ENCODE measurements at regions of chr12 and their contacts with region 1.

Region 1: DNA sequence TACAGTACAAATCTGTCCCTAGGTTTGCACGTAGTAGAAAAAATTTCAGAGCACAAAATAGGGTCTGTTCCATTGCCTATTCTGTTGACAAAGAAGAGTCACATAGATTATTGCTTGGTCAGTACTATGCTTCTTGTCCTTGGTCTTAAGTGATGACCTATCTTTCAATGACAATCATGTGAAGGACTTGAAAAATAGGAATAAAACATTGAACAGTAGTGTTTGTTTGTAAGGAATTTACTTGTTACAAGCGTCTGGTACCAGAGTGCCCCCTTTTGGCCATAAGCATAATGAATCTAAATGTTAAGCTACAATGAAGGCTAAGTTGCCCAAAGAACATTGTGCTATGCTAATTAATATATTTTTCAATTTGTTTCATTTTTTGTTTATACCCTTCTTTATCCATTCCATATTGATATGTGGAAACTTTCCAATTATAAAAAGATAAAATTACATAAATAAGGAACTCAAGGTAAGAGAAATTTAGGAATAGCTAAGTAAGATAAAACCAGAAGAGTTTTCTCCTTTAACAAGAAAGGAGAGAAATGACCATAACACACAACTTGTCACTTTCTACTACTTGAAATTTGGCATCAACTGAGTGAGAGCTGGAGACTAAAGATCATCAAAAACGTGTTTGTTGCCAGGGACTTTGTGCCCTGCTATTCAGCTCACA is 204.7 kb downstream of the EPS8 start:
- DNase-seq: no peak
- ATAC-seq: no peak
- H3K4me3 ChIP-seq: no peak overlapping the region
- H3K27ac ChIP-seq: no peak overlapping the region
- H3K4me1 ChIP-seq: no peaks in the 10 kb centered on the region
- H3K27me3 ChIP-seq: no peaks in the 10 kb centered on the region
- CTCF ChIP-seq: peak; percentile 63

Region 2: GRCh38 chr12:15404485-15404884 is 180.0 kb before region 1 on chr12:
- intact Hi-C with region 1: no loop called
- DNase-seq: no peak
- ATAC-seq: no peak
- H3K4me3 ChIP-seq: no peak overlapping the region
- H3K27ac ChIP-seq: no peak overlapping the region
- H3K4me1 ChIP-seq: no peaks in the 10 kb centered on the region
- H3K27me3 ChIP-seq: no peaks in the 10 kb centered on the region
- CTCF ChIP-seq: no peak

Region 3: DNA sequence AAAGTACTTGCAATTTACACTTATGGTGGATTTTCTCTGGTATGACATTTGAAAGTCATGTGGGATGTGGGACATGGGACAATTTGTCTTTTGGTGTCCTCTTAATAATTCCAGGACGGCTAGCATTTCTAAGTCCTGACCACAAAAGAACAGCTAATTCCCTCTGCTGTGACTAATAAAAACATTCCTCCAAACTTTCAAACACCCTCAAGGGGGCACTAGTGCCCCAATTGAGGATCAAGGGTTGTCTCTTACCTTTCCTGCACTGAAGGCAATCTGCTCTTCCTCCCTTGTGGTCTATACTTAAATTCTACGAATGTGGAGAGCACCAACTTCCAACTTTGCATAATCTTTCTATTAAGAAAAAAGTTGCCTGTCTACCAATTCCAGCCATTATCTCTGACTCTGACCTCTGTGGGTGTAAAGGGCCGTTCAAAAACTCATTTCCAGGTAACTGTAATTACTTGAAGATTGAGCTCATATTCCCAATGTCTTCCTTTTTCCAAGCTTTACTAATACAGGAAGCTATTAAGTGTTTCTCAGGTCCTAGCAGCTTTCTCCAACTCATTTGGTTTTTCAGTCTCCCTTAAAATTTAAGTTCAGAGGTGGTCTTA is 52.0 kb before region 1 on chr12:
- intact Hi-C with region 1: loop called in 1 of 2 experiments (anchors 5 kb)
- DNase-seq: no peak
- ATAC-seq: peak; percentile 43 to 85 (median 68)
- H3K4me3 ChIP-seq: no peak overlapping the region
- H3K27ac ChIP-seq: no peak overlapping the region
- H3K4me1 ChIP-seq: no peaks in the 10 kb centered on the region
- H3K27me3 ChIP-seq: peaks cover 0 to 4% (median 0%) of the 10 kb centered on the region in 3 donors
- CTCF ChIP-seq: peak; percentile 31

Region 4: GRCh38 chr12:15558915-15559528 is 25.5 kb before region 1 on chr12:
- intact Hi-C with region 1: no loop called
- DNase-seq: no peak
- ATAC-seq: peak in 1 of 4 donors; percentile 49
- H3K4me3 ChIP-seq: no peak overlapping the region
- H3K27ac ChIP-seq: no peak overlapping the region
- H3K4me1 ChIP-seq: no peaks in the 10 kb centered on the region
- H3K27me3 ChIP-seq: no peaks in the 10 kb centered on the region
- CTCF ChIP-seq: no peak